ENCODE measurements at regions of chr4 and their contacts with region 1.

Region 1: GRCh38 chr4:109662786-109663185 is 40.5 kb downstream of the CASP6 start:
- DNase-seq: no peak
- CTCF ChIP-seq: no peak

Region 2: GRCh38 chr4:109648266-109648996 is 14.4 kb before region 1 on chr4:
- CTCF ChIA-PET with region 1: interaction called, 12 read pairs
- POLR2A ChIA-PET with region 1: no interaction called
- DNase-seq: no peak
- CTCF ChIP-seq: no peak